Activated naive CD4-positive, alpha-beta T cell treated with anti-CD3 and anti-CD28 coated beads for 36 hours (primary cell): ENCODE measurements at regions of chr10 and their contacts with region 1.

Region 1: DNA sequence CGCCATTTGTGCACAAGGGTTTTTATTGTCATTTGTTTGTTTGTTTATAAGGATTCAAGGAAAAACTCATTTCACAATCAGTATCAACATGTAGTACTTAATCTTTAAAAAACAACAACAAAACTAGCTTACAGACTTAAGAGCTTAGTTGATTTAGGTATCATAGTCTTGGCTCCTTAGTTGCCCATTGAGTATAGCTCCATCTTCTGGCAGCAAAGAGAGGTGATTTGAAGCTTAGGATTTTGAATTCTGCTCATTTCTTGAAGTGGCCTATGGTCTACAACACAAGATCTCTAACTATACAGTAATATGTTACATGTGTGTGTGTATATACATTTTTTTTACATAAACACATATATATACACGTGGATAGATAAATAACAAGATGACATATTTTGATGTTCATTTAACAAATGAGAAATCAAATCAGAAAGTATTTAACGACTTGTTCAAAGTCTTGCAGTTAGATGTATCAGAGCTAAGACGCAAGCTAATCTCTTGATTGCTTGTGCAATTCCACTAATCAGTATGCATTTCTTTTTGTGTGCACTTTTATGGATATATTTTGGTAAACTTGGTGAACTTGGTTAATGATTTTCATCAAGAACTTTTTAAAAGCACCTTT is 307.3 kb downstream of the CAMK1D start:
- DNase-seq: no peak
- H3K4me3 Mint-ChIP-seq: no peak overlapping the region
- H3K27ac Mint-ChIP-seq: no peak overlapping the region
- H3K4me1 Mint-ChIP-seq: peaks cover 2% of the 10 kb centered on the region
- H3K27me3 Mint-ChIP-seq: no peaks in the 10 kb centered on the region

Region 2: DNA sequence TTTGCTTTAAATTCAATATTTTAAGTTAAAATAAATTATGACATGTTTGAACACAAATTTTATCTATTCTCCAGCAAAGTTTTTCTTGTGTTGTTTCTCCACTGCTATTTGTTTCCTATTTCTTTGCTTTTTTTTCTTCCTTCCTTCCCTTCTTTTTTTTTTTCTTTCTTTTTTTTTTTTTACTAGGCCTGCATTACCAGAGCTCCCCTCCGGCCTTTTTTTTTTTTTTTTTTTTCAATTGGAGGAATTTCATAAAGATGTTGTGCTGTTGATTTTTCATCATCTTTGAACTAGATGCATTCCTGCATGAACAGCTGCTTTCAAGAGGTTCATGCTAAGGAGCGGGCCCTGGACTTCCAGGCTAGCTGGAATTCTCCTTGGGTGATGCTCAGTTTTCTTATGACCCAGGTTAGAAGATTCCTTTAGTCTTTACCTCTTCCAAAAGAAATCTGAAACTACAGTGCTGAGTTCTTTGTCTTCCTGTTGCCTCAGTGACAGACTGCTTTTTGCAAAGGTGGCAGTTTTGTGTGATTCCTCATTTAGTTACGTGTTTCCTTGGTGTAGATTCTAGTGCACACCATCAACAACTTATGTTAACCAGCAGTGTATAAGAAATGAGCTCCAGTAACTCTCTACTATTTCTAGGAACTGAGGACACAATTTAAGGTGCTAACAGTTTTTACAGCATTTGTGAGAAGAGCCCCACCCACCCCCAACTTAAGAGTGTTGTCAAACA is 312.1 kb before region 1 on chr10:
- CTCF ChIA-PET with region 1: no interaction called
- intact Hi-C with region 1: no loop called
- DNase-seq: no peak
- H3K4me3 Mint-ChIP-seq: no peak overlapping the region
- H3K27ac Mint-ChIP-seq: no peak overlapping the region
- H3K4me1 Mint-ChIP-seq: peaks cover 16% of the 10 kb centered on the region
- H3K27me3 Mint-ChIP-seq: peaks cover 4% of the 10 kb centered on the region

Region 3: DNA sequence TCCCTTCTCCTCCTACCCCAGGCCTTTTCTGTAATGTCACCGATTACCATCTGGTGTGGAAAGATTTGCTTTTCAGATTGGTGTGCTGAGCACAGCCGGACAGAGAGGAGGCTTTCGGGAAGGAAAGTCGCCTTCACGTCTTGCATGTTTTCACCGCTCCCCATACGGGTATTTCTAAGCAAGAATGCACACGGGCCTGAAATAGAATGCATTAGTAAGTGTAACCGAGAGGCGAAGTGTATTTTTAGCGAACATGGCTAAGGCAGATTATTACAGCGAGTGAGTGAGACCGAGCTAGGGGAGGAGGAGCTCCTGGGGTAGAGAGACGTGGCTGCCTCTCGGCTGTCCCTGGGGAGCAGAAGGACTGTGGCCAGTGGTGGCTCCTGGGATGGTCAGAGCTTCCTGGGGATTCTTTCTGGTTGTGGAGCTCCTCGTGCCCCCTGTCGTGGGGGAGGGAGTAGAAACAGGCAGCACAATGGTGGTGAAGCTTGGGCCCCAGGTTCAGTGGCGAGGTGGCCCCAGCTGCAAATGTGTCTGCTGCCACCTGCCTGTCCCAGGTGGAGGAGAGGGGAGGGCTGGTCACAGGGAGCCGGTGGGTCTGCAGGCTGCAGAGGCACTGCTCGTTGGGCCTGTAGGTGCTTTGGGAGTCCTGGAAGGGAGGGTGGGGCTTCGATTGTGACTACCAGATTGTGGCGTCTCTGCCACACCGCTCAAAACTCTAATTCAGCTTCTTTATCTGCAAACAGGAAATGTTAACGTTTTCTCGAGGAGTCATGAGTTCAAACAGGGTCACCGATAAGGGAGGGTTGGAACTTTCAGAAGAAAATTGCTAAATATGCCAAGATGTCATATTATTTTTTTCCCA is 171.5 kb before region 1 on chr10:
- CTCF ChIA-PET with region 1: interaction called, 6 read pairs
- intact Hi-C with region 1: loop called (anchors 5 kb)
- DNase-seq: peak; percentile 65
- H3K4me3 Mint-ChIP-seq: peak overlapping the region; percentile 25
- H3K27ac Mint-ChIP-seq: peak overlapping the region; percentile 8
- H3K4me1 Mint-ChIP-seq: peaks cover 20% of the 10 kb centered on the region
- H3K27me3 Mint-ChIP-seq: no peaks in the 10 kb centered on the region

Region 4: DNA sequence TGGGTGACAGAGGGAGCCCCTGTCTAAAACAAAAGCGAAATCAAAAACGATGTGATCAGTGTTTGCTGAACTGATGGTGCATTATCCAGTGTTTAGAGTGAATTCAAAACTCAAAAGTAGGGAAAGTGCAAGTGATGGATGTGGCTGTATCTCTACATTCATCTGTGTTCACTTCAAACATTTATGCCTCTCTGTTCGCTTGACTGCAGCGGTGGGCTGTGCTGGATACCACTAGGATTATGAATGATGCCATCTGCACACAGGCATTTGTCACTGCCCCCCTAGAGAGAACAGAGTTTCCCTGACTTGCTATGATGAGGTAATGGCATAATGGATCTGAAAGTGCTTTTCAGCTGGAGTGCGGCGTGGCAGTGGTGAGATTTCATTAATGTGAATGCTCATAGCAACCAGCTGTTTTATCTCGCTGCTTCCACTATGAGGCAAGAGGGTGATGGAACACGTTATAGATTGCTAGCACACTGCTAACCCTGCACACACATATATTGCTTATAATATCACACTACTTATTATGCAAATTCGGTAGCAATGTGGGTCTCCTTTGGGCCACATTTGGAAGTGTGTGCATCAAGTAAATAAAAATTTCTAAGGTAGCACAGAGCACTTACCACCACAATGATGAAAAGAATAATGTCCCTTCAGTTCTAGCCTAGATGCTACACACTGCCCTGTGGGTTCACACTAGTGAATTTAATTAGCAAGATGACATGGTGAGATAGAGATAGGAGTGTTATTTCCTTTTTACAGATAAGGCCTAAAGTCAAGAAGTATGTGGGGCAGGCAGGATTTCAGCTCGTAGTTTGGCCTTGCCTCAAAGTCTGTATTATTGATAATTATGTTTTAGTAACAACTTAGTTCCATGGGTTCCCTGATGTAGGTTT is 142.6 kb before region 1 on chr10:
- CTCF ChIA-PET with region 1: interaction called, 3 read pairs
- intact Hi-C with region 1: loop called (anchors 1 kb)
- DNase-seq: no peak
- H3K4me3 Mint-ChIP-seq: no peak overlapping the region
- H3K27ac Mint-ChIP-seq: no peak overlapping the region
- H3K4me1 Mint-ChIP-seq: peaks cover 18% of the 10 kb centered on the region
- H3K27me3 Mint-ChIP-seq: no peaks in the 10 kb centered on the region

Region 5: GRCh38 chr10:12606461-12606860 is 50.2 kb before region 1 on chr10:
- CTCF ChIA-PET with region 1: interaction called, 3 read pairs
- intact Hi-C with region 1: loop called (anchors 1 kb)
- DNase-seq: no peak
- H3K4me3 Mint-ChIP-seq: peak overlapping the region; percentile 84
- H3K27ac Mint-ChIP-seq: peak overlapping the region; percentile 96
- H3K4me1 Mint-ChIP-seq: peaks cover 14% of the 10 kb centered on the region
- H3K27me3 Mint-ChIP-seq: no peaks in the 10 kb centered on the region

Region 6: DNA sequence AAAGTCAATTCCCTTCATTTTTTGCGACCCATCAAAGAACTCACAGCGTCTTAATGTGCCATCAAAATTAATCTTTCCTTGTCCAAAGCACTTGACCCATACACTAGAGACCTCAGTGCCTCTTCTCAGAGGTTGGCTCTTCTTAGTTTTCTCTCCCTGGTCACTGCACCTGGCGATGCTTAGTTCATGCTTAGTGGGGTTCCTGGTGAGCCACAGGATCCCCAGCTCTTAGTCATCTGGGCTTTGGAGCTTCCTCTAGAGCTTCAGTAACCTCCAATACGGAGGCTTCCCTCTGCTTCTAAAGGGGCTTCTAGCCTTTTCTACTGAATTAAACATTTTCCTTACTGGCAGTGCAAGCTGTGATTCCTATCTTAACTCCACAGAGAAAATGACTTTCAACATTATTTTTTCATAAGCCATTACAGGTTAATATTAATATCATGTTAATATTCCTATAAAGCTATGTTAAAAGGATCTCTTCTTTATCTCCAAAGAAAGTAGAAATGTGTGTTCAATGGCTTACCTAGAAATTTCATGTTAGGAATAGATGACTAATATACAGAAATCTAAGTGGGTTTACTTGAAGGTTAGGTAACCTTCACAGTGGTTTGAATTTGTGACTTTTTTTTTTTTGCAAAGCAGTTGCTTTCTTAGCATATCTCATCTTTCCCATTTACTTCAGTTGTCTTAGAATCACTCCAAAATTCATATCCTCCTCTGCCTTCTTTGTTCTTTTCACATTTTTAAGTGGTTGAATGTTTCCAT is 12.1 kb before region 1 on chr10:
- CTCF ChIA-PET with region 1: interaction called, 19 read pairs
- intact Hi-C with region 1: no loop called
- DNase-seq: no peak
- H3K4me3 Mint-ChIP-seq: no peak overlapping the region
- H3K27ac Mint-ChIP-seq: no peak overlapping the region
- H3K4me1 Mint-ChIP-seq: peaks cover 14% of the 10 kb centered on the region
- H3K27me3 Mint-ChIP-seq: no peaks in the 10 kb centered on the region

Region 7: DNA sequence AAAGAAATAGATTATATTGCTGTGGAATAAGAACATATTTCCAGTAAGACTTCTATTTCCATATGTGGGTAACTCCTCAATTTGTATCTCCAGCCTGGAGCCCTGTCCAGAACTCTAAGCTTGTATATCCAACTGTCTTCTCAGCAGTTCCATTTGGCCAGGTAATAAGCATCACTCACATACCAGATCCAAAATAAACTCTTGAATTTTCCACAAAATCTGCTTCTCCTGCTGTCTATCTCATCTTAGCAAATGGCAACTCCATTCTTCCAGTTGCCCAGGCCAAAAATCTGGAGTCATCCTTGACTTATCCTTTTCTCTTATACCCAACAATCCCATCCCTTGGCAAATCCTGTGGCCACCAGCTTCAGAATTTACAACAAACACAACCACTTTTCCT is 18.6 kb after region 1 on chr10:
- CTCF ChIA-PET with region 1: interaction called, 10 read pairs
- intact Hi-C with region 1: no loop called
- DNase-seq: no peak
- H3K4me3 Mint-ChIP-seq: no peak overlapping the region
- H3K27ac Mint-ChIP-seq: no peak overlapping the region
- H3K4me1 Mint-ChIP-seq: no peaks in the 10 kb centered on the region
- H3K27me3 Mint-ChIP-seq: no peaks in the 10 kb centered on the region